RWPE1 (cell line): ENCODE measurements at regions of chr1 and their contacts with region 1.

Region 1: DNA sequence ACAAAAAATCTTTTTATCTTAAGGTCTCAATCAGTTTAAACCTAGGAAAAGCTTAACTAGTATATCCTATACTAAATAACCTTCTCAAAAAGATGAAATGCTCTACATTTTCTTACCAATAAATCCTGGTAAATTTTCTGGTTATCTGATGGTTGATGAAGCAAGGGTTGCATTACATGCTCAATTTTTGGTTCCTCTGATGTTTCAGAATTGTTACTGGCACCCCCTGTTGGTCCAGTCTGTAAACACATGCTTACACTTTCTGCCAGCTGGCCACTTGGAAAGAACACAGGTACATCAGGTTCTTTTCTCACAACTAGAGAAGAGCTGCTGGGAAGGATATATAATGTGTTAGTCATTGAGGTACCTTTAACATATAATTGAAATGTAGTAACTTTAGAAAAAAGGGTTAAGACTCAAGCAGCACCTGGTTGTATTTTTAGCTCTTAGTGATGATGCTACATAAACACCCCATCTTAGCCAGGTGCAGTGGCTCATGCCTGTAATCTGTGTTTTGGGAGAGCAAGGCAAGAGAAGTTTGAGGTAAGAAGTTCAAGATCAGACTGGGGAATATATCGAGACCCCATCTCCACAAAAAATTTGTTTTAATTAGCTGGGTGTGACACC is 30.9 kb upstream of the TAL1 start:
- DNase-seq: peak; percentile 45
- H3K27ac ChIP-seq: no peak overlapping the region
- CTCF ChIP-seq: peak; percentile 66

Region 2: GRCh38 chr1:47164552-47164951 is 98.3 kb before region 1 on chr1:
- CTCF ChIA-PET with region 1: no interaction called
- POLR2A ChIA-PET with region 1: no interaction called
- DNase-seq: no peak
- H3K27ac ChIP-seq: no peak overlapping the region
- CTCF ChIP-seq: no peak

Region 3: DNA sequence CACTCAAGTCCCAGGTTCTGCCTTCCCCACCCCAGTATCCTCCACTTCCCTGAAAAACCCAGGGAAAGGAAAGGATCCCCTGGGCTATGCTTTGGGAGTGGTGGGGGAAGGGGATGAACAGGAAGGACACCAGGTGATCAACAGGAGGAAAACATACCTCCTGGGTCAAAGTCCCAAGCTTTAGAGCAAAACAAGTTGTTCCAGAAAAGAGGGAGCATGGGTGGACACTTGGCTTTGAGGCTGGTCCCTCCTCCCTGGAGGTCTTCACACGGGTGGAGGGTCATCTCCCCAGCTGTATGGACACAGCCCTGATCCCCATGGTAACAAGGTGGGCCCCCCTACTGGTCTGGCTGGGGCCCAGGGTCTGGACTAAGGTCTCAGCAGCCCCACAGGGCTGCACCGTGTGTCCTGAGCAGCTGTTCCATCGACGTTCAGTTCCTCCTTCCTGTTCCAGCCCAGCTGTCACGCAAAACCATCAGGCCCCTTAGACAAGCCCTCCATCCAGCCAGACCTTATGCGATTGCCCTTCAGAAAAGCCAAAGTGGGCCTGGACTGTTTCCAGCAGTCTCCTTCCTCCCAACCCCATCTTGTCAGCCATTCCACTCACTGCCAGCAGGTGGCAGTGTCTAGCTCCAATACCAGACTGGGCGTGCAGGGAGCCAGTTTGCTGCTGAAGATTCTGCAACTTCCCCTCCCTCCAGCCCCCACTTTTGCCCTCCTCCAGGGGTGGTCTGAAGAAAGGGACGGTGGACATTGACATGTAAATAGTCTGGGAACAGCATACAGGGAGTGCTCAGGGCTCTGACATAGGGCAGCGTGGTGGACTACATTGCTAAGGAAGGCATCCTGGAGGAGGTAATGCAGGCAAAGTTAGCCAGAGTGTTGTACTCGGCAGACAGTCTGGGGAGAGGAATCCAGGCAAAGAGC is 70.2 kb before region 1 on chr1:
- CTCF ChIA-PET with region 1: interaction called, 23 read pairs
- POLR2A ChIA-PET with region 1: no interaction called
- DNase-seq: peak; percentile 73
- H3K27ac ChIP-seq: no peak overlapping the region
- CTCF ChIP-seq: peak; percentile 91

Region 4: DNA sequence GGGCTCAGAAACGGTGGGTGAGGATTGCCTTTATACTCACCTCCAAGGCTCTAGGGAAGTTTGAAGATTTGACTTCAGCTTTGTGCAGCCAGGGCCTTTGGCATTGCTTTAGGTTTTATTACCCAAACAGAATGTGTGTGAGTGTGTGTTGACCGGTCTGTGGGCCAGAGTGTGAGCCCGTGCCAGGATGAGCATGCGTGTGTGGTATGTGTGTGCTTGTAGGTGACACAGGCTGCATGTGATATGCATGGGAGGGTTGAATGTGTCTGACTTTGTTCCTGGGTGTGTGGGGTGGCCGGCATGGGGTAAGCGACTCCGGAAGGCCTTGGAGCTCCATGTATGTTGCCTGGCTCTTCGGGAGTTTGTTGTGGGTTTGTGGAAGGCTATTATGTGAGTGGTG is 335.5 kb after region 1 on chr1:
- CTCF ChIA-PET with region 1: no interaction called
- POLR2A ChIA-PET with region 1: no interaction called
- DNase-seq: no peak
- H3K27ac ChIP-seq: no peak overlapping the region
- CTCF ChIP-seq: no peak